ENCODE measurements at regions of chr6 and their contacts with region 1.

Region 1: DNA sequence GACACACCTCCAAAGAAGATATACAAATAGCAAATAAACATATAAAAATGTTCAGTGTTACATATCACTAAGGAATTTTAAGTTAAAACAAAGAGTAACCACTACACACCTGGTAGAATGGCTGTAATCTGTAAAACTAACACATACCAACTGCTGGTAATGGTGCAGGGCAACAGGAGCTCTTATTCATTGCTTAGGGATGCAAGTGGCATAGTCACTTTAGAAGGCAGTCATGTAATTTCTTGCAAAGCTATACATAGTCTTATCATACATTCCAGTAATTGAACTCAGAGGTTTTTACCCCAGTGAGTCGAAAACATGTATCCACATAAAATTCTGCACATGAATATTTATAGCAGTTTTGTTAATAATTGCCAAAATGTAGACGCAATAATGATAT is 906.8 kb upstream of the CITED2 start:
- DNase-seq: no peak
- ATAC-seq: no peak
- H3K4me3 ChIP-seq: no peak overlapping the region
- H3K27ac ChIP-seq: no peak overlapping the region
- H3K4me1 ChIP-seq: no peaks in the 10 kb centered on the region
- H3K27me3 ChIP-seq: no peaks in the 10 kb centered on the region
- CTCF ChIP-seq: no peak
- POLR2A ChIP-seq: no peak

Region 2: GRCh38 chr6:140344142-140344913 is 63.1 kb after region 1 on chr6:
- intact Hi-C with region 1: loop called in 1 of 2 experiments (anchors 10 kb)
- DNase-seq: no peak
- ATAC-seq: peak in 1 of 4 donors; percentile 76
- H3K4me3 ChIP-seq: no peak overlapping the region
- H3K27ac ChIP-seq: peak overlapping the region in 1 of 3 donors; percentile 85
- H3K4me1 ChIP-seq: peaks cover 0 to 16% (median 2%) of the 10 kb centered on the region in 4 donors
- H3K27me3 ChIP-seq: no peaks in the 10 kb centered on the region
- CTCF ChIP-seq: no peak
- POLR2A ChIP-seq: no peak

Region 3: DNA sequence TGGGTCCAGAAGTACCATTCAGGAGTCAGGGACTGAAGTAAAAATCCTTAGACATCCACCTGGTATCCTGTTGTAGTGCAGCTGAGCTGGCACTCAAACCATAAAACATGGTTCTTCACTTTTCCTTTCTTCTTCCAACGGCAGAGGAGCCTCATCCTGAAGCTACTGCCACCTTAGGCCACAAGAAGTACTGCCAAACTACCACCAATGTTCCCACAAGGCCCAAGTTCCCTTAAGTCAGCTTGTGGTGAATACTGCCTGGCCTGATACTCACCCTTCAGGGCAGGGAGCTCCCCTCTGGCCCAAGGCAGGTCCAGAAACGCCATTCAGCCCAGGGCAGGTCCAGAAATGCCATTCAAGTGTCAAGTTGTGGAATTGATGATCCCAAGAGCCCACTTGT is 146.6 kb after region 1 on chr6:
- intact Hi-C with region 1: no loop called
- DNase-seq: no peak
- ATAC-seq: no peak
- H3K4me3 ChIP-seq: no peak overlapping the region
- H3K27ac ChIP-seq: no peak overlapping the region
- H3K4me1 ChIP-seq: no peaks in the 10 kb centered on the region
- H3K27me3 ChIP-seq: no peaks in the 10 kb centered on the region
- CTCF ChIP-seq: no peak
- POLR2A ChIP-seq: no peak

Measured in right lobe of liver (tissue), 6 donors.